Gastrocnemius medialis (tissue), 4 donors: ENCODE measurements at regions of chr12 and their contacts with region 1.

Region 1: GRCh38 chr12:27779920-27780611 is at the starts of genes KLHL42 and MANSC4:
- DNase-seq: peak; percentile 27 to 41
- ATAC-seq: peak; percentile 82 to 86
- H3K4me3 ChIP-seq: peak within 1 kb of the TSS; percentile 62 to 86 (median 79)
- H3K27ac ChIP-seq: peak within 1 kb of the TSS; percentile 66 to 83 (median 82)
- H3K4me1 ChIP-seq: peaks cover 12 to 18% of the 10 kb centered on the region in 2 donors
- H3K27me3 ChIP-seq: no peaks in the 10 kb centered on the region
- CTCF ChIP-seq: peak in 1 of 5 experiments; percentile 20
- POLR2A ChIP-seq: peak; percentile 0 to 28
- total RNA-seq, gene KLHL42: 3.4 to 6.2 (median 4.4) TPM
- total RNA-seq, gene MANSC4: not detected

Region 2: DNA sequence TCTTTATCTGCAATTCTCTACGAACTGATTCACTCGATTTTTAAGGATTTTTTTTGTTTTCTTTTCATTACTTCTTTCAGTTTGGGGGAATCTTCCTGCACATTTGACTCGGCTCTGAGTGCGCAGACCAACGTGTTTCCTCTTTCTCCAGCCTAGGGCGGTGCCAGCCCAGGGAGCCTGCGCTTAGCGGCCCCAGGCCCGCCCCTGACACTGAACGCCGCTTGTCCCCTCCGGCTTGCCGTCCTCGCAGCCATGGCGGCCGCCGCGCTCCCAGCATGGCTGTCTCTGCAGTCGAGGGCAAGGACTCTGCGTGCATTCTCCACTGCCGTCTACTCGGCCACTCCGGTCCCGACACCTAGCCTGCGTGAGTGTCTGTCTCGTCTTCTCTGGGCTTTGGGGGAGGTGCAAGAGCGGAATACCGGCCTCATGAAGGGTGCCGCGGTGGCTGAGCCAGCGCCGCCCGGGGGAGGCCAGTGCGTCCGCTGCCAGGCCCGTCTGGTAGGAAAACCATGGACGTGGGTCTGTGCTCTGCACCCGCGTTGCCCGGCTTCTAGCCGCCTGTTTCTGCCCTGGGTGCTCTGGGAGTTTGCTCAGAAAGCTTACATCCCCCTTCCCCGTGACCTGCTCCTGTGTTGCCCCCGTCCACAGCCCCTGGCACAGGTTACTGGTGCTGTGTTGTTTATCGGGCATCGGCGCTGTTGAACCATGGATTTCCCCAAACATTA is 69.3 kb before region 1 on chr12 and contains the start of gene MRPS35:
- in situ Hi-C with region 1: no loop called
- intact Hi-C with region 1: loop called (anchors 5 kb)
- DNase-seq: peak; percentile 85 to 87
- ATAC-seq: peak; percentile 95 to 96
- H3K4me3 ChIP-seq: peak within 1 kb of the TSS; percentile 82 to 98 (median 86)
- H3K27ac ChIP-seq: peak within 1 kb of the TSS; percentile 78 to 87 (median 85)
- H3K4me1 ChIP-seq: peaks cover 19 to 23% of the 10 kb centered on the region in 2 donors
- H3K27me3 ChIP-seq: no peaks in the 10 kb centered on the region
- CTCF ChIP-seq: no peak
- POLR2A ChIP-seq: peak; percentile 46 to 56
- total RNA-seq, gene MRPS35: 76.3 to 153 (median 98.2) TPM

Region 3: GRCh38 chr12:27821259-27821973 is 41.4 kb after region 1 on chr12:
- in situ Hi-C with region 1: no loop called
- intact Hi-C with region 1: loop called (anchors 2 kb)
- DNase-seq: peak in 1 of 2 donors; percentile 12
- ATAC-seq: peak; percentile 73 to 77
- H3K4me3 ChIP-seq: no peak overlapping the region
- H3K27ac ChIP-seq: no peak overlapping the region
- H3K4me1 ChIP-seq: no peaks in the 10 kb centered on the region
- H3K27me3 ChIP-seq: no peaks in the 10 kb centered on the region
- CTCF ChIP-seq: peak; percentile 53 to 77 (median 59)
- POLR2A ChIP-seq: no peak